Panc1 (cell line): ENCODE measurements at regions of chr6 and their contacts with region 1.

Region 1: GRCh38 chr6:169212897-169213813 is 40.5 kb downstream of the THBS2 start:
- DNase-seq: peak; percentile 62
- ATAC-seq: peak; percentile 100
- H3K4me3 ChIP-seq: peak overlapping the region; percentile 45 to 60
- H3K27ac ChIP-seq: peak overlapping the region; percentile 89
- H3K4me1 ChIP-seq: peaks cover 6% of the 10 kb centered on the region; the same call in 1 of the 2 replicates
- H3K27me3 ChIP-seq: no peaks in the 10 kb centered on the region
- CTCF ChIP-seq: peak; percentile 81

Region 2: GRCh38 chr6:169194737-169195136 is 18.4 kb before region 1 on chr6:
- CTCF ChIA-PET with region 1: no interaction called
- POLR2A ChIA-PET with region 1: interaction called, 17 read pairs
- in situ Hi-C with region 1: no loop called
- intact Hi-C with region 1: no loop called
- DNase-seq: no peak
- ATAC-seq: no peak
- H3K4me3 ChIP-seq: no peak overlapping the region
- H3K27ac ChIP-seq: no peak overlapping the region
- H3K4me1 ChIP-seq: no peaks in the 10 kb centered on the region
- H3K27me3 ChIP-seq: no peaks in the 10 kb centered on the region
- CTCF ChIP-seq: no peak

Region 3: GRCh38 chr6:169473663-169474062 is 260.5 kb after region 1 on chr6:
- CTCF ChIA-PET with region 1: no interaction called
- POLR2A ChIA-PET with region 1: no interaction called
- in situ Hi-C with region 1: no loop called
- intact Hi-C with region 1: no loop called
- DNase-seq: no peak
- ATAC-seq: no peak
- H3K4me3 ChIP-seq: no peak overlapping the region
- H3K27ac ChIP-seq: no peak overlapping the region
- H3K4me1 ChIP-seq: no peaks in the 10 kb centered on the region
- H3K27me3 ChIP-seq: no peaks in the 10 kb centered on the region
- CTCF ChIP-seq: no peak

Region 4: DNA sequence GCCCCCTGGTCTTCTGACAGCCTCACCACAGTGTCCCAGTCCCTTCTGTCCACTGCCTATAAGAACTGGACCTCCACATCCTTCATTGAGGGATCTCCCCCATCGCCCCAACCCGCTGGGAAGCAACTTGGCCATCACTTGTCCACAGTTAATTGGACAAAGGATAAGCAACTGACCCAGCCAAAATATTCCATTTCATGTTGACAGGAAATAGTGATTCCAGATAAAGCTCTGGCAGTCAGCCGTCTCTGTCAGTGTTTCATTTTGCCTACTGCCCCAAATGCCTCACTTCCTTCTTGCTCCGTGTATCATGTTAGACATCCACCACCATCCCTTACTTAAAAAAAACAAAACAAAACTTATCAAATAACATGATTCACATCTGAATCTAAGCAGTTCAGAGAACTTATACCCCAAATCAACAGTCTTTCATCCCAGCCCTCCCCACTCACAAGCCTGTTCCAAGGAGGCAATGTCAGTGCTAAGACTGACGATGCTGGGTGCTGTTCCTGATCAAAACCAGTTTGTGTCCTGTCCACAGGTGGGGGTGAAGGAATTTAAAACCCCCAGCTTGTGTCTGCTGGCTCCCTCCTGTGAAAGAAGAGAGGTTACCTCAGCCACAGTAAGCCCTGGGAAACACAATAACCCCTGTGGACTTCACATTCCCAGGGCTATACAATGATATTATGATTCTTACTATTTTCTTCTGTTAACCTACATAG is 326.2 kb after region 1 on chr6:
- CTCF ChIA-PET with region 1: interaction called, 15 read pairs
- POLR2A ChIA-PET with region 1: no interaction called
- in situ Hi-C with region 1: no loop called
- intact Hi-C with region 1: no loop called
- DNase-seq: no peak
- ATAC-seq: no peak
- H3K4me3 ChIP-seq: no peak overlapping the region
- H3K27ac ChIP-seq: no peak overlapping the region
- H3K4me1 ChIP-seq: no peaks in the 10 kb centered on the region
- H3K27me3 ChIP-seq: no peaks in the 10 kb centered on the region
- CTCF ChIP-seq: no peak